IMR-90 (cell line): ENCODE measurements at regions of chr15 and their contacts with region 1.

Region 1: DNA sequence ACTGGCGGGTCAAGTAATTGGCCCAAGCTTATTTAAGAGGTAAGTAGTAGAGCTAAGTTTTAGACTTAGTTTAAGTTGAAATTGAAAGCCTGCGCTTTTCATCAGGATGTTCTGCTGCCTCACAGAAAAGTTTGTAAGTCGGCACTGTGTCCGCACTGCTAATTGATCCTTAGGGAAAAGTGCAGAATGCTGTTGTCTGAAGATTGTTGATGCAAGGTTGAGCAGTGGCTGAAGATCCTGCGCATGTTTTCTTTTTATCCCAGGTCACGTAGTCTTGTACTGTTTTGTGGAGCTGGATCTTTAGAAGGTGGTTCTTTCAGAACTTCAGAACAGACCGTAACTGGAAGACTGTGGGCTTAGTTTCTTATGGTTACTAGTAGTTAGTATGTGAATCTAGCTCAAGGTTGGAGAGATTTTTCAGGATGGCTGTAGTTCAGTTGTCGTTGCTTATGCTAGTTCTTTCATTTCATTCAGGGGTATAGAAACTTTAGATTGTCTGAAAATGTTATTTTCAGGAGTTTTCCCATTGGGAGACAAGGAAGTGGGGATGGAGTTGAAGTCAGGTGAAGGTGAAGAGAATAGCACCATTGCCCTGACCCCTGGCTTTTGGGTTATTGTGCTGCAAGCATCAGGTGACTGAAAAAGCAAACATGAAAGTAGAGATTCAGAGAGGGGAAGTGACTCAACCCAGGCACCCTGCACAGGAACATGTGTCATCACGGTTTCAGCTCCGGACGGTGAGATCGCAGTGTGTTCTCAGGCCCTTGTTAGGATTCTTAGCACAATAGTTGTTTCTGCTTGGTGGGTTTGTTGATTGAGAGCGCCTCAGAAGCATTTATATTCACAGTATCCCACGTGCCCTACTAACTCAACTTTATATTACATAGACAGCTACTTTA is 32.8 kb downstream of the AKAP13 start:
- DNase-seq: peak; percentile 95
- ATAC-seq: peak; percentile 88
- H3K4me3 ChIP-seq: no peak overlapping the region
- H3K27ac ChIP-seq: no peak overlapping the region
- H3K4me1 ChIP-seq: peaks cover 6% of the 10 kb centered on the region
- H3K27me3 ChIP-seq: no peaks in the 10 kb centered on the region
- CTCF ChIP-seq: no peak
- POLR2A ChIP-seq: no peak
- RAD21 ChIP-seq: peak; percentile 35

Region 2: DNA sequence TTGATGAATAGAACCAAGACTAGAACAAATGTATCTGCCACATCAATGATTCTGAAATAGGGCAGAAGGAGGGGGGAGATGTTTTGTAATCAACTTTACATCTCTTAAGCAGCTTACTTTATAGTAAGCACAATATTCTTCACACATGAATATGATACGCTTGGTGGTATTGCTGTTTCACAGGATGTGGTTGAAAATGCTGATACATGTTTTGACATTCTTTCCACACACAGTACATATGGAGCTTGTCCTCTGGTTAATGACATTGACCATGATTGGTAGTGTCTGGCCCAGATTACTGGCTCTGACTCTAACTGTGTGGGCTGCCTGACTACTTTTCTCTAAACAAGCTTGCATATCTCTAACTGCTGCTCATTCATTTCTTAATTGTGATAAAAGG is 212.7 kb after region 1 on chr15:
- CTCF ChIA-PET with region 1: no interaction called
- POLR2A ChIA-PET with region 1: no interaction called
- dilution Hi-C with region 1: no loop called
- in situ Hi-C with region 1: no loop called
- intact Hi-C with region 1: loop called (anchors 10 kb)
- DNase-seq: peak; percentile 96
- ATAC-seq: peak; percentile 77
- H3K4me3 ChIP-seq: no peak overlapping the region
- H3K27ac ChIP-seq: peak overlapping the region; percentile 76; the same call in 1 of the 2 replicates
- H3K4me1 ChIP-seq: peaks cover 20% of the 10 kb centered on the region
- H3K27me3 ChIP-seq: no peaks in the 10 kb centered on the region
- CTCF ChIP-seq: no peak
- POLR2A ChIP-seq: no peak
- RAD21 ChIP-seq: no peak